ENCODE measurements at regions of chr9 and their contacts with region 1.

Region 1: DNA sequence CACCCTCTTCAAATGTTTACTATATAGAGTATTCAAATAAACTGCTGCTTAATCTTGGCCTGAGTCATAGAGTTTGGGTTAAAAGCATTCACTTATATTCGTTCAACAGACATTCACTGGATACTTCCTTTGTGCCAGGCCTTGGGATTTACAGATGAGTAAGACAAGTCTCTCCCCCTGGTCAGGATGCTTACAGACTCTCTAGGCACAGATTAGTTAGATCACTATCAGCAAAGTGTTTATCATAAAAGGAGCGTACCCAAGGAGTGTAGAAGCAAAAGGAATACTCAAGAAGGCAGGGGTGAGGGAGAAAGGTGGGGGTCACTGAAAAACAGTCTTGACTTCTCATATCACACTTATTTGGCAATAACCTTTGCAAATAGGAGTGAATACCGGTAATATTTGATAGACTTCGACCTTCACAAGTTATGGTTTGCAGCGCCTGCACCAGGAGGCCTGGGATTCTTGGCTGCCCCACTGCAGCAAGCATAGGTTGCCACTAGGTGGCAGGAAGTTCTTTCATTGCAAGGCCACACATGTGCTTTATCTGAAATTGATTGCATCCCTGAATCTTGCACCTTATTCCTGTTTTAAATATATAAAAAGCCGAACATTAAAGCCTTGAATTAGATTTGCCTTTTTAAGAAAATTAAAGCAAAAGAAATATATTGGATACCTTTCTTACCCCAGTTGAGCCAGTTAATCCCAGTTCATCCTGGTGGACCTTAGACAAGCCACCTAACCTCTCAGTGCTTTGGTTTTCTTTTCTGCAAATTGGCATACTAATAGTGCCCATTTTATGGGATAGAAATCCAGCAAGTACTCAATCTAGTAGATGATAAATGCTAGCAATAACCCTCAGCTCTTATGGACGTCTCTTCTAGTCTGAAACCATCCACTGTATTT is 6.5 kb upstream of the TRMT10B start:
- DNase-seq: peak; percentile 41
- H3K4me3 ChIP-seq: no peak overlapping the region
- H3K27ac ChIP-seq: no peak overlapping the region
- H3K4me1 ChIP-seq: no peaks in the 10 kb centered on the region
- H3K27me3 ChIP-seq: no peaks in the 10 kb centered on the region
- CTCF ChIP-seq: peak; percentile 93 to 98

Region 2: DNA sequence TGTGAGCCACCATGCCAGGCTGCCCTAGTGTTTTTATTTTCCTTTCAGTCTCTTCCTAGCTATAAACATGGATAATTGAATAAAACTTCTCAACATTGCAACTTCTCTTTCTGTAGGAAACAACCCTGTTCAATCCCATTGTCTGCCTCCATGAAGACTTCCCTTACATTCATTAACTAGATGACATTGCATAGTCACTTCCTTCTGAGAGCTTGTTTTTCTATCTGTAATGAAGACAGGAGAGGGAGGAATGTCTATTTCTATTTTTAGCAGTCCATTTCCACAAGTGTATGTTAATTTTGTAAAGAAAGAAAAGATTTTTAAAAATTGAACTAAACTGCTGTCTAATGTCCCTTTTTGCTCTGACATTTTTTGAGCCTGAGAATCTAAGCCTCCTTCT is 1230.0 kb before region 1 on chr9:
- CTCF ChIA-PET with region 1: no interaction called
- dilution Hi-C with region 1: no loop called
- in situ Hi-C with region 1: no loop called
- intact Hi-C with region 1: no loop called
- DNase-seq: no peak
- H3K4me3 ChIP-seq: no peak overlapping the region
- H3K27ac ChIP-seq: no peak overlapping the region
- H3K4me1 ChIP-seq: no peaks in the 10 kb centered on the region
- H3K27me3 ChIP-seq: no peaks in the 10 kb centered on the region
- CTCF ChIP-seq: no peak

Region 3: DNA sequence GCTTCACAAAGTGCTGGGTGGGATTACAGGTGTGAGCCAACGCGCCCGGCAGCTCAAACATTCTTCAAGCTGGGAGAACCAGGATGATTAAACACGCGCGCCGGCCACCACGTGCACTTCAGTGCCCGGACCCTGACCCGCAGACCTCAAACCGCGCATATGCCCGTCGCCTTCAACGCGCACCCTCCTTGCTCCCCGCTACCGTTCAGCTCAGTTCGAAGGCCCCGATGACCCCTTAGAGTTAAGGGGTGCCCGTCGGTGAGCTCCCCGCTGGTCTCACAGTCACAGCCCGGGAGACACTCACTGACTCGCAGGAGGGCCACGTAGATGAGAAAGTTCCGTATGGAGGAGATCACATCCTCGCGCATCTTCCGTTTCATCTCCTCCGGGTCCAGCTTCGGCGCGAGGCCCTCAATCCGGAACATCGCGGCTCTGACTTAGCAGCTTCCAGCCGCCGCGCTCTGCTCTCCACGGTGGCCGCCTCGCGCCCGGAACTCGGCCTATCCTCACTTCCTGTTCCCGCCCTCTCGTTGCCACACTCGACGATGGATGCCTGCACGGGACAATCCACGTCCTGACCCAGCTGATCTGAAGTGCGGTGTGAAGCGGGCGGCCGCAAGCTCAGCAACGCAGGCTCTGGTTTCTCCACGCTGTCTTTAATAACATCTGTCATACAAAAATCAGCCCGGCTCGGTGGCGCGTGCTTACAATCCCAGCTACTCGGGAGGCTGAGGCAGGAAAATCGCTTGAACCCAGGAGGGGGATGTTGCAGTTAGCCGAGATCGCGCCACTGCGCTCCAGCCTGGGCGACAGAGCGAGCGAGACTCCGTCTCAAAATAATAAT is 154.8 kb before region 1 on chr9 and contains the start of gene TOMM5:
- CTCF ChIA-PET with region 1: no interaction called
- dilution Hi-C with region 1: no loop called
- in situ Hi-C with region 1: loop called in 1 of 2 experiments (anchors 25 kb)
- intact Hi-C with region 1: no loop called
- DNase-seq: peak; percentile 90
- H3K4me3 ChIP-seq: peak within 1 kb of the TSS; percentile 95 to 98 (median 98)
- H3K27ac ChIP-seq: peak within 1 kb of the TSS; percentile 88
- H3K4me1 ChIP-seq: peaks cover 25% of the 10 kb centered on the region
- H3K27me3 ChIP-seq: no peaks in the 10 kb centered on the region
- CTCF ChIP-seq: no peak
- total RNA-seq, gene TOMM5: 69.7 to 135 TPM

Region 4: GRCh38 chr9:37903647-37904444 is 156.7 kb after region 1 on chr9 and contains the start of gene SLC25A51:
- CTCF ChIA-PET with region 1: no interaction called
- dilution Hi-C with region 1: no loop called
- in situ Hi-C with region 1: no loop called
- intact Hi-C with region 1: loop called (anchors 2 kb)
- DNase-seq: peak; percentile 94
- H3K4me3 ChIP-seq: peak within 1 kb of the TSS; percentile 60 to 83 (median 78)
- H3K27ac ChIP-seq: peak within 1 kb of the TSS; percentile 67
- H3K4me1 ChIP-seq: peaks cover 25% of the 10 kb centered on the region
- H3K27me3 ChIP-seq: no peaks in the 10 kb centered on the region
- CTCF ChIP-seq: peak; percentile 92 to 98
- total RNA-seq, gene SLC25A51: 30.0 to 78.0 TPM

Region 5: DNA sequence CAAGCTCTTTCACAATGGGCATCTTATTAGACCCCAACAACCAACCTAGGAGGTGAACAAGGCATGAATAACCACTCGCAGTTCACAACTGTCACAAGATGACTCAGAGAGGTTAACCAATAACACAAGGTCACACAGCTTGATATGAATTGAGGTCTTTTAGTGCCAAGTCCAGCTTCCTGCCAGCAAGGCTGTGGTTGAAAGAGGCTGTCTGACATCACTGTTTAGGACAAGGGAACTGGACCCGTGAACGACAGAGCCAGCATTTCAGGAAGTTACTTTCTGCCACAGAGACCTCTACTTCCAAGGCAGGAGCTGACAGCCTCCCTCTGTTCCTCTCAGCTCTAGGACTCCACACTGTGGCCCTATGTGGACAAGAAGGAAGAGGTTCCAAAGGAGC is 592.0 kb after region 1 on chr9:
- CTCF ChIA-PET with region 1: no interaction called
- dilution Hi-C with region 1: loop called (anchors 25 kb)
- in situ Hi-C with region 1: no loop called
- intact Hi-C with region 1: no loop called
- DNase-seq: peak; percentile 60
- H3K4me3 ChIP-seq: no peak overlapping the region
- H3K27ac ChIP-seq: no peak overlapping the region
- H3K4me1 ChIP-seq: peaks cover 4% of the 10 kb centered on the region
- H3K27me3 ChIP-seq: no peaks in the 10 kb centered on the region
- CTCF ChIP-seq: no peak